ENCODE measurements at regions of chr1 and their contacts with region 1.

Region 1: DNA sequence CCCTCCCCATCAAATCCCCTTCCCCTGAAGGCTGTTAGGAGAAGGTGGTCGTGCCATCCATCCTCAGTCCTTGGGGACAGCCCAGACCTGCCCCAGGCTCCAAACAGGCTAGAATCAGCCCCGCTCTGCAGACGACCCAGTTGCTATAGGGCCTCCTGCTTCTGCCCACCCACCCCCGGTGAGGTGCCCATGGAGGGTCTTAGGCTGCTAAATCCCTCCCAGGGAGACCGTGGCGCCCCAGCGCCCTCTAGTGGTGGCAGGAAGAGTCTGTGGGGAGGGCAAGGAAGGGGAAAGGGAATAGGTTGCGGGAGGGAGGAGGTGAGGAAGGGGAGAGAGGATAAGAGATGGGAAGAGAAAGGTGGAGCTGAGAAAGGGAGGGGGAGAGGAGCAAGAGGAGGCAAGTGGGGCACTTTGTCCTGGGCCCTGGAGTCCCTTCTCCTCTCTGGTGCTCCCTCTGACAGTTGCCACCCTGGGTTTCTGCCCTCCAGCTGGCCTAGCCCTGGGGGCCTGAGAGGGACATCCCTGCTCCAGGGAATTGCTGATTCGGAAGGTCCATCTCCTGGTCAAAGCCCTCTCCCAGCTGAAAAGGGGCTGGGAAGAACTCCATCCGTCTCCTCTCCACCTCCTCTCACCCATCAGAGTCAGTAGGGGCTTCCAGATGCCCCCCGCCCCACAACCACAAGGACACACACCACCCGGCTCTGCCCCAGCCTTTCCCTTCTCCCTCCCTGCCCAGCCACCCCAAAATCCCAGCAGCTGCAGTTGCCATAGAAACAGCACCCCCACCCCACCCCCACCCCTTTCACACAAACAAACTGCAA is 55.4 kb downstream of the CAMK2N1 start:
- DNase-seq: peak; percentile 52
- ATAC-seq: no peak
- H3K4me3 ChIP-seq: no peak overlapping the region
- H3K4me3 Mint-ChIP-seq: no peak overlapping the region
- H3K27ac ChIP-seq: no peak overlapping the region
- H3K27ac Mint-ChIP-seq: no peak overlapping the region
- H3K4me1 ChIP-seq: no peaks in the 10 kb centered on the region
- H3K4me1 Mint-ChIP-seq: peaks cover 3% of the 10 kb centered on the region
- H3K27me3 ChIP-seq: peaks cover 0 to 7% (median 3%) of the 10 kb centered on the region in 4 experiments
- H3K27me3 Mint-ChIP-seq: peaks cover 48% of the 10 kb centered on the region
- CTCF ChIP-seq: peak; percentile 65

Region 2: GRCh38 chr1:20212685-20213331 is 217.8 kb before region 1 on chr1:
- CTCF ChIA-PET with region 1: interaction called, 10 read pairs
- POLR2A ChIA-PET with region 1: no interaction called
- intact Hi-C with region 1: no loop called
- DNase-seq: peak; percentile 77
- ATAC-seq: peak; percentile 90
- H3K4me3 ChIP-seq: peak overlapping the region in 4 of 5 experiments; percentile 6 to 44 (median 28)
- H3K4me3 Mint-ChIP-seq: peak overlapping the region; percentile 74
- H3K27ac ChIP-seq: no peak overlapping the region
- H3K27ac Mint-ChIP-seq: peak overlapping the region; percentile 53
- H3K4me1 ChIP-seq: peaks cover 10 to 16% of the 10 kb centered on the region in 2 donors
- H3K4me1 Mint-ChIP-seq: peaks cover 15% of the 10 kb centered on the region
- H3K27me3 ChIP-seq: peaks cover 0 to 38% (median 2%) of the 10 kb centered on the region in 4 experiments
- H3K27me3 Mint-ChIP-seq: peaks cover 14% of the 10 kb centered on the region
- CTCF ChIP-seq: peak; percentile 94

Region 3: GRCh38 chr1:20376880-20377494 is 53.6 kb before region 1 on chr1:
- CTCF ChIA-PET with region 1: interaction called, 17 read pairs
- POLR2A ChIA-PET with region 1: no interaction called
- intact Hi-C with region 1: loop called (anchors 5 kb)
- DNase-seq: peak; percentile 61
- ATAC-seq: peak; percentile 84
- H3K4me3 ChIP-seq: no peak overlapping the region
- H3K4me3 Mint-ChIP-seq: no peak overlapping the region
- H3K27ac ChIP-seq: no peak overlapping the region
- H3K27ac Mint-ChIP-seq: no peak overlapping the region
- H3K4me1 ChIP-seq: peaks cover 0 to 15% of the 10 kb centered on the region in 2 donors
- H3K4me1 Mint-ChIP-seq: peaks cover 23% of the 10 kb centered on the region
- H3K27me3 ChIP-seq: peaks cover 0 to under 1% (median 0%) of the 10 kb centered on the region in 4 experiments
- H3K27me3 Mint-ChIP-seq: peaks cover 33% of the 10 kb centered on the region
- CTCF ChIP-seq: peak; percentile 71

Measured in B cell (primary cell).